ENCODE measurements at regions of chr2 and their contacts with region 1.

Region 1: GRCh38 chr2:219119422-219120043 is 41.1 kb downstream of the NHEJ1 start:
- DNase-seq: peak; percentile 38 to 77 (median 60)
- ATAC-seq: peak; percentile 64 to 73 (median 68)
- H3K4me3 ChIP-seq: no peak overlapping the region
- H3K27ac ChIP-seq: no peak overlapping the region
- H3K4me1 ChIP-seq: peaks cover 12 to 22% (median 14%) of the 10 kb centered on the region in 3 donors
- H3K27me3 ChIP-seq: no peaks in the 10 kb centered on the region
- CTCF ChIP-seq: peak; percentile 40 to 61 (median 55)

Region 2: GRCh38 chr2:218622606-218623365 is 496.7 kb before region 1 on chr2:
- intact Hi-C with region 1: no loop called
- DNase-seq: no peak
- ATAC-seq: peak in 1 of 4 donors; percentile 17
- H3K4me3 ChIP-seq: no peak overlapping the region
- H3K27ac ChIP-seq: no peak overlapping the region
- H3K4me1 ChIP-seq: no peaks in the 10 kb centered on the region
- H3K27me3 ChIP-seq: no peaks in the 10 kb centered on the region
- CTCF ChIP-seq: no peak

Region 3: DNA sequence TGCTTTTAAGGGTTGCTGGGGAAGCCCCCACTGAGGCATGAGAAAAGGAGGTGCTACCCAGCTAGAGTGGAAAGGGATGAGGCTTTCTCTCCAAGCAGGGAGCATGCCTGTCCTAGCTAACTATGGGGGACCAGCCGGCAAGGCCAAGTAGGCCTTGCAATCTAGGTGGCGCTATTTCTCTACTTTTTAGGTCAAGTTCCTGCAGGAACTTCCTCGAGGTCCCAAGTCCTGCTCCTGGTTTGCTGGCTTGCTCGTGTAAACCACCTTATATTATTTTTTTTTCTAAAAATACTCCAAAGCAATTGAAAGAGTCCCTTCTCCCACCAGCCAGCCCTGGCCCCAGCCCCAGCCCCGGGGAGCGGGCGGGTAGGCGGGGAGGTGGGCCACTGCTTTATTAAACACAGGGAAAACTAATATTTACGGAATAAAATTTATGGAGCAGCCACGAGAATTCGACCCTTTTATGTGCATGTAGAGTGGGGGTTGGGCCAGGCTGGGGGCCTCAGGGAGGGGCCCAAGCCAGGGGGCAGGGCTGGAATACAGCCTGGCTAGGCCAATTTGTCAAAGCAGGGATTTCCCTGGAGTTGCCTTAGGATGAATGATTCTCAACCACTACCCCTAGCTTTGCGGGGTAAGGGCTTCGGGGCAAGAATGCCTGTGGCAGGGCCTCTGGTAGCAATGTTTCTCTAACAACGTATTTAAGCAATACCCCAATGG is 46.0 kb before region 1 on chr2:
- intact Hi-C with region 1: loop called in 1 of 3 experiments (anchors 5 kb)
- DNase-seq: peak in 3 of 6 donors; percentile 34 to 49 (median 41)
- ATAC-seq: peak in 3 of 4 donors; percentile 71 to 82 (median 80)
- H3K4me3 ChIP-seq: no peak overlapping the region
- H3K27ac ChIP-seq: no peak overlapping the region
- H3K4me1 ChIP-seq: no peaks in the 10 kb centered on the region
- H3K27me3 ChIP-seq: no peaks in the 10 kb centered on the region
- CTCF ChIP-seq: peak; percentile 6 to 42 (median 35)

Region 4: DNA sequence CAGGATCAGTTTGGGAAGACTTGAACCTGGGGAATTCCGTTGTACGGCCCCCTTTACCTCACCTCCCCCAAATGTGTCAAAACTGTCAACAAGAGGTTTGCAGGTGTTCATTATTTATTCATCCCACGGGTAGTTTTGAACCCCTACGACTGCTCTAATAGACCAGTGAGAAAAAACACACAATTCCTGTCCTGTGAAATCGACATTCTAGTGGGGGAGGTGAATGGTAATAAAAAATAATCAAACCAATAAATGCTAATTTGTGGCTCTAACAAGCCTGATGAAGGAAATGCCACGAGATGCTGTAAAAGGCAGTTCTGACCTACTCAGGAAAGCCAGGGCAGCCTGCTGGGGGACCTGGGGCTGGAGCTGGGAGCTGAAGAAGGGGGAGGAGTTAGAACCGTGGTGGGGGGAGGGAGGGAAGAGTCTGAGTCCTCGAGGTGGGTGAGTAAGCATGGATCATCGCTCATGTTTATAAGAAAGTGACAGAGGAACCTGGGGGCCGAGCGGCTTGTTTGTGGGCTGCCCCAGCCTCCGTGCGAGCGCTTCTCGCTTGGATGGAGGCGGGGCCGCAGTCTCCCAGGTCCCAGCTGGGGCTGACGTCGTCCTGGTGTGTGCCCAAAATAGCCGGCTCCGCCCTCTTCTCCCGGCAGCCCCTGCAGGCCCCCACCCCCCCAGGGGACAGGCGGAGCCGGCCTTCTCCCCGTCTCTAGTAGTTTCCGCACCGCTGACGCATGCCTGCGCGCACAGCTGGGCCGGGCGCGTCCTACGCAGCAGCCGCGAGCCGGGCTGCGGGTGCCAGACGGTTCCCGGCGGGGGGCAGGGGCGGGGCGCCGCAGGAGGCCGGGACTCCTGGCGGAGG is 159.4 kb after region 1 on chr2 and contains the start of gene DNAJB2:
- intact Hi-C with region 1: no loop called
- DNase-seq: peak; percentile 96 to 99 (median 99)
- ATAC-seq: peak; percentile 92 to 95 (median 94)
- H3K4me3 ChIP-seq: peak within 1 kb of the TSS; percentile 42 to 85 (median 74)
- H3K27ac ChIP-seq: peak within 1 kb of the TSS; percentile 92 to 98 (median 98)
- H3K4me1 ChIP-seq: peaks cover 7 to 18% (median 9%) of the 10 kb centered on the region in 3 donors
- H3K27me3 ChIP-seq: no peaks in the 10 kb centered on the region
- CTCF ChIP-seq: no peak
- total RNA-seq, gene DNAJB2: 44.5 to 66.7 (median 60.8) TPM

Measured in pancreas (tissue), 10 donors.